GM12878 (cell line): ENCODE measurements at regions of chr9 and their contacts with region 1.

Region 1: GRCh38 chr9:136728080-136728547 is 14.6 kb downstream of the LCN10 start:
- DNase-seq: peak; percentile 39
- ATAC-seq: peak; percentile 79
- H3K4me3 ChIP-seq: peak overlapping the region; percentile 76
- H3K27ac ChIP-seq: peak overlapping the region; percentile 54
- H3K4me1 ChIP-seq: peaks cover 13% of the 10 kb centered on the region
- H3K27me3 ChIP-seq: no peaks in the 10 kb centered on the region
- CTCF ChIP-seq: peak; percentile 79 to 99 (median 88)
- EP300 ChIP-seq: peak in 1 of 2 experiments; percentile 39; a peak in 1 of 4 replicates
- POLR2A ChIP-seq: peak; percentile 99
- RAD21 ChIP-seq: no peak

Region 2: DNA sequence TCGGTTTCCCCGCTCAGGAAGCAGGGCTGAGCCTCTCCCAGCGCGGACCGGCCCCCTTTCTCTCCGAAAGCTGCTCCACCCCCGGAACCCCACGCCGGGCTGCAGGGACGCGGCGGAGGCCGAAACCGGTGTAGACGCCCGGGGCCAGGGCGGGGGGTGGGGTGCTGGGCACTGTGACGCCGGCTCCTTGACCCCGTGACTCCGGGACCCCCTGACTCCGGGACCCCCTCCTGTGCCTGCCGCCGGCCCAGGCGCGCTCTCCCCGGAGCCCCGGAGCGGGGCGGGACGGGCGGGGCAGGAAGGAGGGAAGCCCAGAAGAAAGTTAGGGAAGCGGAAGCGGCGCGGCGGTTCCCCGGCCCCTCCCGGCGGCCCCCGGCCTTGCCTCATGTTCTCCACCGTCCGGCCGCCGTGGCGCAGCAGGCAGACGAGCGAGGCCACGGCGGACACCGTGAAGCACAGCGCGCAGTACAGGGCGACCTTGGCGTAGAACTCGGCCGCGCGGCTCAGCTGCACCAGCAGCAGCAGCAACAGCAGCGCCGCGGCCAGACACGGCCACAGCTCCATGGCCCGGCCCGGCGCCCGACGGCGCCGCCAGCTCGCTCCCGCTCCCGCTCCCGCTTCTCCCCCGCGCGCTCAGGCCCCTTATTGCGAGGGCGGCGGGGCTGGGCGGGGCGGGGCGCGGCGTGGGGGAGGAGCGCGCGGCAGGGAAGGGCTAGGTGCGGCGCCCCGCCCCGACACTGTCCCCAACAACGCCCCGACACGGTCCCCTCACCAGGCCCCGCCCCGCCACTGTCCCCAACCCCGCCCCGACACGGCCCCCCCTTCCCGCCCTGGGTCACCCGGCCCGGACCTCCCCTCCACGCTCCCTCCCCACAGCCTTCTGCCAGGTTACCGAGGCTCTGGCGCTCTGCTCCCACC is 41.1 kb before region 1 on chr9 and contains the start of gene AGPAT2:
- CTCF ChIA-PET with region 1: interaction called, 12 read pairs
- POLR2A ChIA-PET with region 1: no interaction called
- RAD21 ChIA-PET with region 1: interaction called, 3 read pairs
- SMC1A ChIA-PET with region 1: interaction called, 3 read pairs
- in situ Hi-C with region 1: no loop called
- intact Hi-C with region 1: no loop called
- DNase-seq: no peak
- ATAC-seq: peak; percentile 92
- H3K4me3 ChIP-seq: peak within 1 kb of the TSS; percentile 99
- H3K27ac ChIP-seq: peak within 1 kb of the TSS; percentile 55
- H3K4me1 ChIP-seq: peaks cover 16% of the 10 kb centered on the region
- H3K27me3 ChIP-seq: no peaks in the 10 kb centered on the region
- CTCF ChIP-seq: no peak
- EP300 ChIP-seq: no peak
- POLR2A ChIP-seq: peak; percentile 75
- RAD21 ChIP-seq: no peak
- polyA plus RNA-seq, gene AGPAT2: 0.10 to 0.47 TPM

Region 3: GRCh38 chr9:136700959-136701667 is 27.0 kb before region 1 on chr9:
- CTCF ChIA-PET with region 1: interaction called, 16 read pairs
- POLR2A ChIA-PET with region 1: interaction called, 4 read pairs
- RAD21 ChIA-PET with region 1: interaction called, 6 read pairs
- SMC1A ChIA-PET with region 1: interaction called, 4 read pairs
- in situ Hi-C with region 1: no loop called
- intact Hi-C with region 1: no loop called
- DNase-seq: peak; percentile 43
- ATAC-seq: peak; percentile 92
- H3K4me3 ChIP-seq: peak overlapping the region; percentile 48
- H3K27ac ChIP-seq: peak overlapping the region; percentile 77
- H3K4me1 ChIP-seq: peaks cover 24% of the 10 kb centered on the region
- H3K27me3 ChIP-seq: no peaks in the 10 kb centered on the region; a peak in 1 of 4 replicates
- CTCF ChIP-seq: no peak
- EP300 ChIP-seq: peak; percentile 63 to 76; a peak in 3 of 4 replicates
- POLR2A ChIP-seq: peak; percentile 82
- RAD21 ChIP-seq: no peak

Region 4: GRCh38 chr9:136742591-136743391 is 14.7 kb after region 1 on chr9 and contains the start of gene LCN10:
- CTCF ChIA-PET with region 1: interaction called, 7 read pairs
- POLR2A ChIA-PET with region 1: interaction called, 15 read pairs
- RAD21 ChIA-PET with region 1: interaction called, 5 read pairs
- SMC1A ChIA-PET with region 1: interaction called, 7 read pairs
- in situ Hi-C with region 1: no loop called
- intact Hi-C with region 1: no loop called
- DNase-seq: no peak
- ATAC-seq: peak; percentile 51
- H3K4me3 ChIP-seq: peak within 1 kb of the TSS; percentile 33; the same call in 1 of the 2 replicates
- H3K27ac ChIP-seq: no peak within 1 kb of the TSS
- H3K4me1 ChIP-seq: peaks cover 15% of the 10 kb centered on the region
- H3K27me3 ChIP-seq: peaks cover 0 to 8% of the 10 kb centered on the region in 2 experiments; a peak in 3 of 4 replicates
- CTCF ChIP-seq: peak in 1 of 3 experiments; percentile 21; a peak in 1 of 6 replicates
- EP300 ChIP-seq: no peak
- POLR2A ChIP-seq: no peak
- RAD21 ChIP-seq: no peak
- polyA plus RNA-seq, gene LCN10: 0.11 TPM in 1 of 2 experiments, not detected in the other

Region 5: DNA sequence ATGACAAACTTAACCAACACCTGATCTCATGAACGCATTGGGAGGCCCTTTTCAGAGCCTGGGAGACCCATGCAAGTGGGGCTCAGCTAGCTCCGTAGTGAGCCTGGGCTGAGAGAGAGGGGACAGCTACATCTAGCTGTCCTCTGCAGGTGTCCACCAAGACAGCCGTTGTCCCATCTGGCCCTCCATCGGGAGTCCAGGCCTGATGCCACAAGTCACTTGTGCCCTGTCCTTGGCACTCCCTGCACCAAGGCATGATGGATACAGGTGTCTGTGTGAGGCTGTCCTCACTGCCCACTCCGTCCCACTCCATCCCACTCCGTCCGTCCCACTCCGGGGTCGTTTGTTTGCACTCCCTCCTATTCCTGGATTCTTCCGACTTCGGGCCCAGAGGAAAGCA is 140.5 kb after region 1 on chr9:
- CTCF ChIA-PET with region 1: no interaction called
- POLR2A ChIA-PET with region 1: no interaction called
- RAD21 ChIA-PET with region 1: no interaction called
- SMC1A ChIA-PET with region 1: no interaction called
- in situ Hi-C with region 1: no loop called
- intact Hi-C with region 1: no loop called
- DNase-seq: no peak
- ATAC-seq: no peak
- H3K4me3 ChIP-seq: no peak overlapping the region
- H3K27ac ChIP-seq: no peak overlapping the region
- H3K4me1 ChIP-seq: peaks cover 5% of the 10 kb centered on the region
- H3K27me3 ChIP-seq: no peaks in the 10 kb centered on the region
- CTCF ChIP-seq: no peak
- EP300 ChIP-seq: no peak
- POLR2A ChIP-seq: 0 out of 2 replicates have a peak, but pooled peaks have one; percentile 14
- RAD21 ChIP-seq: no peak